ENCODE measurements at regions of chr19 and their contacts with region 1.

Region 1: GRCh38 chr19:8158411-8159074 is 9.2 kb upstream of the FBN3 start:
- DNase-seq: peak; percentile 76
- H3K4me3 ChIP-seq: no peak overlapping the region
- H3K27ac ChIP-seq: no peak overlapping the region
- H3K4me1 ChIP-seq: peaks cover 9% of the 10 kb centered on the region
- H3K27me3 ChIP-seq: no peaks in the 10 kb centered on the region
- CTCF ChIP-seq: peak; percentile 73 to 78

Region 2: DNA sequence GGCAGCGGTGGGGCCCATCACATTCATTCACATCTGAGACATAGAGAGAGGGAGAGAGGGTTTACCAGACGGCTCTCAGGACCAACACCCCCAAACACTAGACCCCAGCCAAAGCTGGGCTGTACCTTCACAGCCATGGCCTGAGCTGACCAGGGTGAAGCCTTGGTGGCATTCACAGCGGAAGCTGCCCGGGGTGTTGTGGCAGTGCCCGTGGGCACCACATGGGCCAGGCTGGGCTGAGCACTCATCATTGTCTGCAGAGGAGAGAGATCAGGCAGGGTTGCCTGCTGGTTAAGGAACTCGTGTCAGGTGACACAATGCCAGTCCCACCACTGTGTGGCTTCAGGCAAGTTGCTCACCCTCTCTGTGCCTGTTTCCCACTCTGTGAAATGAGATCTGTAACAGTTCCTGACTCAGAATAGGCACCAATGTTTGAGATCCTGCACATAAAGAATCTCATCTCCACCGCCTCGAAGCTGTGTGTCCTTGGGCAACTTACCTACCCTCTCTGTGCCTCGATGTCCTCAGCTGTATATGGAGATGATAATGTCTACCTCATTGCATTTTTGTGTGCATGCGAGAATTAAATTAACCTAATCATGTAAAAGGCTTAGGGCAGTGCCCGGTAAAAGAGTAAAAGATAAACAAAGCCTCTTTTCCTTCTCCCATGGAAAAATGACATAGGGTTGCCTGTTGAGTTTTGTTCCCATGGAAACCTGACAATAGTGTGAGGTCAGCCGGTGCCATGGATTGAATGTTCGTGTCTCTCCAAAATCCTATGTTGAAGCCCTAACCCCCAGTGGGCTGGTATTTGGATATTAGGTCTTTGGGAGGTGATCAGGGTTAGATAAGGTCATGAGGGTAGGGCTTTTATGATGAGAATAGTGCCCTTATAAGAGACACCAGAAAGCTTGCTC is 83.1 kb before region 1 on chr19:
- CTCF ChIA-PET with region 1: no interaction called
- dilution Hi-C with region 1: no loop called
- in situ Hi-C with region 1: no loop called
- intact Hi-C with region 1: no loop called
- DNase-seq: no peak
- H3K4me3 ChIP-seq: no peak overlapping the region
- H3K27ac ChIP-seq: no peak overlapping the region
- H3K4me1 ChIP-seq: no peaks in the 10 kb centered on the region
- H3K27me3 ChIP-seq: no peaks in the 10 kb centered on the region
- CTCF ChIP-seq: no peak

Region 3: GRCh38 chr19:8108560-8109445 is 49.7 kb before region 1 on chr19:
- CTCF ChIA-PET with region 1: no interaction called
- dilution Hi-C with region 1: loop called (anchors 5 kb)
- in situ Hi-C with region 1: no loop called
- intact Hi-C with region 1: no loop called
- DNase-seq: no peak
- H3K4me3 ChIP-seq: no peak overlapping the region
- H3K27ac ChIP-seq: no peak overlapping the region
- H3K4me1 ChIP-seq: no peaks in the 10 kb centered on the region
- H3K27me3 ChIP-seq: no peaks in the 10 kb centered on the region
- CTCF ChIP-seq: no peak

Region 4: DNA sequence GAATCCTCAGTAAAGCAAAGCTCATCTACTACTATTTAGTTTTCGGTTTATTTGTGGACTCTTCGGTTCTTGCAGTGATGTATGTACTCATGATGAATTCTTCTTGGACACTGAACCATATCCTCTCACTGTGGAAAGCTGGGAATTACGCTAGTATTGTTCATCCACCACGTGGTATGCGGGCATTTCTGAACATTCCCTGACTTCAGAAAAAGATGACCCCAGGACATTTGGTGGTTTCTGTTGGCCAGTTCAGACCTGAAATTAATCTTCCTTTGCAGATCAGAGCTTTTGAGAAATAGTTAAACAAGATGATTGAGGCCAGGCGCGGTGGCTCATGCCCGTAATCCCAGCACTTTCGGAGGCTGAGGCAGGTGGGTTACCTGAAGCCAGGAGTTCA is 16.2 kb after region 1 on chr19:
- CTCF ChIA-PET with region 1: interaction called, 12 read pairs
- dilution Hi-C with region 1: no loop called
- in situ Hi-C with region 1: no loop called
- intact Hi-C with region 1: no loop called
- DNase-seq: peak; percentile 99
- H3K4me3 ChIP-seq: no peak overlapping the region
- H3K27ac ChIP-seq: peak overlapping the region; percentile 54
- H3K4me1 ChIP-seq: peaks cover 9% of the 10 kb centered on the region
- H3K27me3 ChIP-seq: no peaks in the 10 kb centered on the region
- CTCF ChIP-seq: no peak

Region 5: DNA sequence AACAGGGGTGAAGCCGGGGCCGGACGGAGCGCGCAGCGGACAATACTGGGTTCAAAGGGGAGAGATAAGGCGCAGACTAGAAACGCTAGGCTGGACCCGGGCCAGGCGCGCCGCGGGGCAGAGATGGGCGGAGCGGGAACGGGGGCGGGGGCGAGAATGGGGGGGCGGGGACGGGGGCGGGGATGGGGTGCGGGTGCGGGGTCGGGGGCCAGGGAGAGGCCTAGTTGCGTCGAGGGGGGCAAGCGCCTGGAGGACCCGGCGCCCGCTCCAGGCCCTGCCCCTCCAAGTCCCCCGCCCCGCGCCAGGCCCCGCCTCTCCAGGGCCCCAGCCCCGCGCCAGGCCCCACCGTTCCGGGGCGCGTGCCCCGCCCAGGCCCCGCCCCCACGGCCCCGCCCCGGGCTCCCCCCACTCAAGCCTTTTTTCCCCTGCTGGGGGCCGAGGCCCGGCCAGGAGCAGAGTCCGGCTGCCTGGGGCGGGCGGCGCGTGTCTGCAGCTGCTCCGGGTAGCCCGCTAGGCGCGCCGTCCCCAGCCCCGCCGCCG is 50.4 kb after region 1 on chr19 and contains the start of gene CERS4:
- CTCF ChIA-PET with region 1: no interaction called
- dilution Hi-C with region 1: no loop called
- in situ Hi-C with region 1: no loop called
- intact Hi-C with region 1: loop called (anchors 5 kb)
- DNase-seq: no peak
- H3K4me3 ChIP-seq: peak within 1 kb of the TSS; percentile 71 to 84 (median 71)
- H3K27ac ChIP-seq: peak within 1 kb of the TSS; percentile 44
- H3K4me1 ChIP-seq: peaks cover 12% of the 10 kb centered on the region
- H3K27me3 ChIP-seq: no peaks in the 10 kb centered on the region
- CTCF ChIP-seq: no peak
- total RNA-seq, gene CERS4: 21.0 to 23.3 TPM

Region 6: DNA sequence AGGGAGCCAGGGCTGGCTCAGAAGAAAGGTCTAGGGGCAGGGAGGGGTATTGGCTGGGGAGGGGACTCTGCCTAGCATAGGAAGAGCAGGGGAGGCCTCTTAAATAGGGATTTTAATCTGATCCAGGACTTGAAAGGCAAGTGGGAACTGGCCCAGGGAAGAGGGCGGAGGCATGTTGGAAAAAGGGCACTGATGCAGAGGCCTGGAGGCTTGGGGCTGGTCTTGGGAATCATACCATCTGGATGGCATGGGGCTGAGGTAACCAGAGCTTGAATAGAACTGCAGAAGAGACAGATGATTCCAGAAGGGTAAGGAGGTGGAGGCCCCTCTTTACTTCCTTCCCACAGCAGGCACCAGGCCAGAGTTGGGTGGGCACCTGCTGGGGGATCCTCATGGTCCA is 79.7 kb after region 1 on chr19:
- CTCF ChIA-PET with region 1: no interaction called
- dilution Hi-C with region 1: loop called (anchors 5 kb)
- in situ Hi-C with region 1: no loop called
- intact Hi-C with region 1: no loop called
- DNase-seq: peak; percentile 42
- H3K4me3 ChIP-seq: peak overlapping the region in 1 of 3 experiments; percentile 12
- H3K27ac ChIP-seq: no peak overlapping the region
- H3K4me1 ChIP-seq: peaks cover 24% of the 10 kb centered on the region
- H3K27me3 ChIP-seq: no peaks in the 10 kb centered on the region
- CTCF ChIP-seq: no peak

Region 7: DNA sequence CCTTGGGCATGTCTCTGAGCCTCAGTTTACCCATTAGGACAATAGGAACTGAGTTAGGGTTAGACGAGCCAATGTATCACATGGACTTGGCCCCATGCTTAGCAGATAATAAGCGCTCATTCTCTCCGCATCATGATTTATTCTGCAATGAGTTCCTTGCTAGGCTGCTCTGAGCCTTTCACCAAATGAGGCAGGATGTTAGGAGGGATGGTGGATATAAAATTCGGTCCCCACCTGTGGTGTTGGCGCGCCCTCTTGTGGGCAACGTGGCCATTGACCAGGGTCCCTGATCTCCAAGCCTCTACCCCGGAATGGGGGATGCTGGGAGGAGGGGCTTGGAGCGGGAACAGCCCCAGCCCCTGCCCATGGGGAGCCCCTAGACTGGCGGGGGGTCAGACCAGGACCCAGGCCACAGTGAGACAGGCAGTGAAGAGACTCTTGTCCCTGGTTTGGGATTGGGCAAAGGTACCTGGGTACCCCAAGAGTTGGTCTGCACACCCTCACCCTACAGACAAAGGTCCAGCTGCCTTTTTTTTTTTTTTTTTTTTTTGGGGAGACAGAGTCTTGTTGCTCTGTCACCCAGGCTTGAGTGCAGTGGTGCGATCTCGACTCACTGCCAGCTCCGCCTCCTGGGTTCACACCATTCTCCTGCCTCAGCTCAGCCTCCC is 94.5 kb after region 1 on chr19:
- CTCF ChIA-PET with region 1: no interaction called
- dilution Hi-C with region 1: no loop called
- in situ Hi-C with region 1: loop called (anchors 5 kb)
- intact Hi-C with region 1: loop called (anchors 1 kb)
- DNase-seq: peak; percentile 54
- H3K4me3 ChIP-seq: no peak overlapping the region
- H3K27ac ChIP-seq: no peak overlapping the region
- H3K4me1 ChIP-seq: peaks cover 3% of the 10 kb centered on the region
- H3K27me3 ChIP-seq: no peaks in the 10 kb centered on the region
- CTCF ChIP-seq: peak; percentile 82 to 94

Region 8: DNA sequence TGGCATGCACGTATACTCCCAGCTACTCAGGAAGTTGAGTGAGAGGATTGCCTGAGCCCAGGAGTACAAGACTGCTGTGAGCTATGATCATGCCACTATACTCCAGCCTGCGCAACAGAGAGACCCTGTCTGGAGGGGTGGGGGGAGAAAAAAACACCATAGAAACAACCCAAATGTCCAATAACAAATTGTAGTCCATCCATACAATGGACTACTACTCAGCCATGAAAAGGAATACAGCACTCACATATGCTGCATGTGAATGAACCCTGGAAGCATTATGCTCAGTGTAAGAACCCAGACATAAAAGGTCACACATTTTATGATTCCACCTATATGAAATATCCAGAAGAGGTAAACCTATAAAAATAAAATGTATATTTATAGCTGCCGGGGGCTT is 107.3 kb after region 1 on chr19:
- CTCF ChIA-PET with region 1: no interaction called
- dilution Hi-C with region 1: no loop called
- in situ Hi-C with region 1: no loop called
- intact Hi-C with region 1: no loop called
- DNase-seq: no peak
- H3K4me3 ChIP-seq: no peak overlapping the region
- H3K27ac ChIP-seq: no peak overlapping the region
- H3K4me1 ChIP-seq: no peaks in the 10 kb centered on the region
- H3K27me3 ChIP-seq: no peaks in the 10 kb centered on the region
- CTCF ChIP-seq: no peak

Measured in mammary epithelial cell (primary cell).